Naive thymus-derived CD4-positive, alpha-beta T cell (primary cell): ENCODE measurements at regions of chr5 and their contacts with region 1.

Region 1: GRCh38 chr5:131634996-131635754 is at the start of gene RAPGEF6:
- DNase-seq: peak; percentile 84 to 99 (median 97)
- ATAC-seq: peak; percentile 91
- H3K4me3 ChIP-seq: peak within 1 kb of the TSS; percentile 95
- H3K4me3 Mint-ChIP-seq: peak within 1 kb of the TSS in 5 of 10 donors; percentile 95 to 99 (median 97)
- H3K27ac ChIP-seq: peak within 1 kb of the TSS; percentile 98
- H3K27ac Mint-ChIP-seq: peak within 1 kb of the TSS; percentile 88 to 100 (median 99)
- H3K4me1 ChIP-seq: peaks cover 43 to 49% of the 10 kb centered on the region in 2 donors
- H3K4me1 Mint-ChIP-seq: peaks cover 16 to 44% (median 31%) of the 10 kb centered on the region in 7 donors
- H3K27me3 ChIP-seq: no peaks in the 10 kb centered on the region
- H3K27me3 Mint-ChIP-seq: peaks cover 0 to 3% (median 0%) of the 10 kb centered on the region in 5 donors
- total RNA-seq, gene RAPGEF6: 50.9 to 186 (median 114) TPM

Region 2: GRCh38 chr5:131068893-131069643 is 566.1 kb before region 1 on chr5:
- CTCF ChIA-PET with region 1: no interaction called
- POLR2A ChIA-PET with region 1: no interaction called
- intact Hi-C with region 1: loop called in 1 of 2 experiments (anchors 1 kb)
- DNase-seq: peak; percentile 8 to 81 (median 67)
- ATAC-seq: peak; percentile 99
- H3K4me3 ChIP-seq: peak overlapping the region; percentile 20
- H3K4me3 Mint-ChIP-seq: peak overlapping the region; percentile 1 to 83 (median 73)
- H3K27ac ChIP-seq: peak overlapping the region; percentile 46
- H3K27ac Mint-ChIP-seq: peak overlapping the region; percentile 83 to 99 (median 92)
- H3K4me1 ChIP-seq: peaks cover 18 to 29% of the 10 kb centered on the region in 2 donors
- H3K4me1 Mint-ChIP-seq: peaks cover 28 to 68% (median 58%) of the 10 kb centered on the region in 7 donors
- H3K27me3 ChIP-seq: no peaks in the 10 kb centered on the region
- H3K27me3 Mint-ChIP-seq: no peaks in the 10 kb centered on the region

Region 3: GRCh38 chr5:131263648-131264450 is 371.3 kb before region 1 on chr5 and contains the start of gene CDC42SE2:
- CTCF ChIA-PET with region 1: no interaction called
- POLR2A ChIA-PET with region 1: no interaction called
- intact Hi-C with region 1: loop called in 1 of 2 experiments (anchors 2 kb)
- DNase-seq: peak; percentile 81 to 95 (median 90)
- ATAC-seq: peak; percentile 94
- H3K4me3 ChIP-seq: peak within 1 kb of the TSS; percentile 87
- H3K4me3 Mint-ChIP-seq: peak within 1 kb of the TSS; percentile 80 to 97 (median 92)
- H3K27ac ChIP-seq: peak within 1 kb of the TSS; percentile 98
- H3K27ac Mint-ChIP-seq: peak within 1 kb of the TSS; percentile 88 to 98 (median 95)
- H3K4me1 ChIP-seq: peaks cover 36% of the 10 kb centered on the region in 2 donors
- H3K4me1 Mint-ChIP-seq: peaks cover 25 to 61% (median 47%) of the 10 kb centered on the region in 7 donors
- H3K27me3 ChIP-seq: no peaks in the 10 kb centered on the region
- H3K27me3 Mint-ChIP-seq: no peaks in the 10 kb centered on the region
- total RNA-seq, gene CDC42SE2: 143 to 265 (median 215) TPM

Region 4: DNA sequence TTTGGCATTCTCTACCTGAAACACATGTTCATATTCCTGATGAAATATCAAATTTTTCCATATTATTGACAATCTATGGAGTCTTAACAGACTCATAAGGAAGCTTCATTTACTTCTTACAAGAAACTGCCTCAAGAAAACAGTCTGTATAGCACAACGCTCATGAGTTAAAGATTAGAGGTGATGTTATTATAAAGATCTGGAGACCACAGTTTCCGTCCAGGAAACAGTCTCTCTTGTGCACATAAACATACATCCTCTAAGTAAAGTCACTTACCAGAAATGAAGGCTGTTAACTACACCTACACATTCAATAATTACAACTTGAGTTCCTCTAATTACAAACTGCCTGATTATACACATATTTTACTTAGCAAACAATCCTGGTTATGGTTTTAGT is 87.0 kb before region 1 on chr5:
- CTCF ChIA-PET with region 1: no interaction called
- POLR2A ChIA-PET with region 1: interaction called, 4 read pairs
- intact Hi-C with region 1: loop called (anchors 1 kb)
- DNase-seq: peak in 7 of 9 donors; percentile 60 to 82 (median 68)
- ATAC-seq: peak; percentile 97
- H3K4me3 ChIP-seq: peak overlapping the region; percentile 63
- H3K4me3 Mint-ChIP-seq: peak overlapping the region; percentile 93 to 100 (median 98)
- H3K27ac ChIP-seq: peak overlapping the region; percentile 83
- H3K27ac Mint-ChIP-seq: peak overlapping the region; percentile 92 to 99 (median 97)
- H3K4me1 ChIP-seq: peaks cover 6 to 44% of the 10 kb centered on the region in 2 donors
- H3K4me1 Mint-ChIP-seq: peaks cover 28 to 71% (median 58%) of the 10 kb centered on the region in 7 donors
- H3K27me3 ChIP-seq: no peaks in the 10 kb centered on the region
- H3K27me3 Mint-ChIP-seq: no peaks in the 10 kb centered on the region

Region 5: DNA sequence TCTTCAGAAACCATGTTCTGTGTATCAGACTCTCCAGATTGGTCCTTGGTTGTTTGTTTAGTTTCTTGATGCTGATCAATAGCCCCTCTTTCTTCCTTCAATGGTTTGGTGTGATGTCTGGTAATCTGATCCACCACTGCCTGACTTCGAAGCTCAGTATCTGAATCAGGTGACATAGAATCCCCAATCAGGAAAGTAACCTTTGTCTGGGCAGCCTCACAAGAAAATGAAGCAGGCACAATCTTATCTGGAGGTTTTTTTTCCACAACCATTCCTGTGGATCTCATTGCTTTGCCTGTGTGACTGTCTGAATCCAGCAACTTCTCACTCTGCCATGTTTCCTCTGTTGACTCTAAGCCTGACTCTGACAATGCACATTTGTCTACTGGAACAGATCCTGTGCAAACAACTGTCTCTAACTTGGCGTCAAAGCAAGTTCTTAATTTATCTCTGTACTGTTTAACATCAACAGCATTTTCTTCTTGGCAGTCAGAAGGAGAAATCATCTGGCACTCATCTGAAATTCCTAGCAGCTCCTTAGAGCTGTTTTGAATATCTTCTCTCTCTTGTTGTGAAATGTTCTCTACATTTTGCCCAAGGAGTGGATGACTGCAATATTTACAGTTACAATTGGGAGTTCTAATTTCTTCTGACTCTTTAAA is 37.0 kb after region 1 on chr5:
- CTCF ChIA-PET with region 1: no interaction called
- POLR2A ChIA-PET with region 1: interaction called, 3 read pairs
- intact Hi-C with region 1: loop called in 1 of 2 experiments (anchors 5 kb)
- DNase-seq: no peak
- ATAC-seq: no peak
- H3K4me3 ChIP-seq: no peak overlapping the region
- H3K4me3 Mint-ChIP-seq: no peak overlapping the region
- H3K27ac ChIP-seq: no peak overlapping the region
- H3K27ac Mint-ChIP-seq: peak overlapping the region in 5 of 9 donors; percentile 2 to 56 (median 36)
- H3K4me1 ChIP-seq: no peaks in the 10 kb centered on the region
- H3K4me1 Mint-ChIP-seq: peaks cover 0 to 31% (median 8%) of the 10 kb centered on the region in 7 donors
- H3K27me3 ChIP-seq: no peaks in the 10 kb centered on the region
- H3K27me3 Mint-ChIP-seq: no peaks in the 10 kb centered on the region

Region 6: DNA sequence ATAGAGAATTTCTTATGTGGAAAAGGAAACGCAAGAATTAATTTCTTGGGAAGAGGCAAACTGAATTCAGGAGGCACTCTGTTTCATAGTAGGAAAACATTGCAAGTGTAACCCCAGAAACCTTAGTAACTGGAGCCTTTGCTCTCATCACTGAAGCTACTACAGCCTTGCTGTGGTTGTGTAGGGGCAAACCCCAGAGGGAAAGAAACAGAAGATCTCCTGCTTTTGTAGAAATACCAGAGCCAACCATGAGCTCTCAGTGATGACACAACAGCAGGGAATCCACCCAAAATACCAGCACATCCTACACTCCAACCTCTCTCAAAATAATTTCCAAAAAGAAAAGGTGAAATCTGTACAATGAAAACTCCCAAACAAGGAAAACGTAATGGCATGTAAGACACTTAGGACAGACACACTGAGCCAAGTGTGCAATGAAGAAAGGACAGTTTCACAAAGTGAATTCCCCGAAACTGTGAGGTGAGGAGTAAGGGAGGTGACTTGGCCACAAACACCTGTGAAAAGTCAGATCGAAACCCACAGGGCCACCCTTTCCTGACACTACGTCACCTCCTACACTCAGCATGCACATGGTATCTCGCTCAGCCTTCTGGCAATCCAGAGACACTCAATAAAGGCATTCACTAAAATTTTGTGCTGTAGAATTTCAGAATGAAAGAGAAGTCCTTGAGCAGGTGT is 384.8 kb after region 1 on chr5:
- CTCF ChIA-PET with region 1: no interaction called
- POLR2A ChIA-PET with region 1: no interaction called
- intact Hi-C with region 1: loop called in 1 of 2 experiments (anchors 1 kb)
- DNase-seq: peak in 8 of 9 donors; percentile 37 to 75 (median 57)
- ATAC-seq: peak; percentile 95
- H3K4me3 ChIP-seq: no peak overlapping the region
- H3K4me3 Mint-ChIP-seq: peak overlapping the region in 7 of 10 donors; percentile 35 to 81 (median 53)
- H3K27ac ChIP-seq: peak overlapping the region; percentile 46
- H3K27ac Mint-ChIP-seq: peak overlapping the region; percentile 38 to 95 (median 69)
- H3K4me1 ChIP-seq: peaks cover 19 to 24% of the 10 kb centered on the region in 2 donors
- H3K4me1 Mint-ChIP-seq: peaks cover 10 to 54% (median 43%) of the 10 kb centered on the region in 7 donors
- H3K27me3 ChIP-seq: no peaks in the 10 kb centered on the region
- H3K27me3 Mint-ChIP-seq: peaks cover 0 to 45% (median 0%) of the 10 kb centered on the region in 5 donors

Region 7: DNA sequence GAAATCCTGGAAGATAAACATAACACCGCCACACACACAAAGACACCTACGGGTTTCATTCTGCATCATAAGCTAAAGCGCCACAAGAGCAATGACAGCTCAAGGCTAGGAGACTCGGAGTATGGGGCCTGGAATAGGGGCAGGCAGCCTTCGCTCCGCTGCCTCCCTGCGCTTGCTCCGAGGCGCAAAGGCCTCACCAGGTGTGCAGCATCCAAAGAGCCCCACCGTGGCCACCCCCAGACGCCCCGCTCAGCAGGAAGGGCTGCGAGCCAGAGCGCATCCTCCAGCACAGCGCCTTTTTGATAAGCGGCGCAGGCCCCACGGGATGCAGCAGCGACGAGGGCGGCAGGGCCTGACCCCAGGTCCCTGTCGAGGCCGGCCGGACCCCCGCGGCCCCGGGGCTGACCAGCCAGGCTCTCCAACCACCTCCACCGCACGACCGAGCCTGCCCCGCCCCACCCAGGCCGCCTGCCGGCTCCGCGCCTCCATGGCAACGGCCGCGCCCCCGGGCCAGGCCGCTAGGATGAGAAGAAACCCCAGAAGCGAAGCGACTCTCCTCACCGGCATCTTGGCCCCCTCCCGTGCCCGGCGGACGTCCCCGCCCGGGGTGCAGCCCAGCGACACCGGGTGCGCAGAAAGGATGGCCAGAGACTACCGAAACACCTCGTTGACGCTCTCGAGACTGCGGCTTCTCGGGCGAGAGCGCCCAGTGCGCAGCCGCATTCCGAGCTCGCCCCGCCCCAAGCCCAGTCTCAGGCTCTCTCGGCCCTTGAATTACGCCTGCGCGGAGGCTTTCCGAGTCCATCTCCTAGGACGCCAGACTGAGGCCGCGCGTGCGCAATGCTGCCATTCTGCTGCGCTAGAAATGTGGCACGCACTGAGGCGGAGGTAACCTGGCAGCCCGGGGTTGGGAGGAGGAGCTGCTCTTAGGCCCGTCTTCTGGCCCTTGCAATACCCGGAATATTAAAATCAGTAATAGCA is 1102.0 kb after region 1 on chr5 and contains the start of gene KIF3A:
- CTCF ChIA-PET with region 1: no interaction called
- POLR2A ChIA-PET with region 1: no interaction called
- intact Hi-C with region 1: loop called in 1 of 2 experiments (anchors 10 kb)
- DNase-seq: peak; percentile 93 to 98 (median 97)
- ATAC-seq: peak; percentile 95
- H3K4me3 ChIP-seq: peak within 1 kb of the TSS; percentile 96
- H3K4me3 Mint-ChIP-seq: peak within 1 kb of the TSS; percentile 87 to 94 (median 92)
- H3K27ac ChIP-seq: peak within 1 kb of the TSS; percentile 78
- H3K27ac Mint-ChIP-seq: peak within 1 kb of the TSS; percentile 84 to 94 (median 92)
- H3K4me1 ChIP-seq: peaks cover 13 to 18% of the 10 kb centered on the region in 2 donors
- H3K4me1 Mint-ChIP-seq: peaks cover 14 to 52% (median 39%) of the 10 kb centered on the region in 7 donors
- H3K27me3 ChIP-seq: no peaks in the 10 kb centered on the region
- H3K27me3 Mint-ChIP-seq: peaks cover 0 to 18% (median 2%) of the 10 kb centered on the region in 5 donors
- total RNA-seq, gene KIF3A: 10.5 to 30.0 (median 18.7) TPM